Psoas muscle (tissue), 8 donors: ENCODE measurements at regions of chr2 and their contacts with region 1.

Region 1: DNA sequence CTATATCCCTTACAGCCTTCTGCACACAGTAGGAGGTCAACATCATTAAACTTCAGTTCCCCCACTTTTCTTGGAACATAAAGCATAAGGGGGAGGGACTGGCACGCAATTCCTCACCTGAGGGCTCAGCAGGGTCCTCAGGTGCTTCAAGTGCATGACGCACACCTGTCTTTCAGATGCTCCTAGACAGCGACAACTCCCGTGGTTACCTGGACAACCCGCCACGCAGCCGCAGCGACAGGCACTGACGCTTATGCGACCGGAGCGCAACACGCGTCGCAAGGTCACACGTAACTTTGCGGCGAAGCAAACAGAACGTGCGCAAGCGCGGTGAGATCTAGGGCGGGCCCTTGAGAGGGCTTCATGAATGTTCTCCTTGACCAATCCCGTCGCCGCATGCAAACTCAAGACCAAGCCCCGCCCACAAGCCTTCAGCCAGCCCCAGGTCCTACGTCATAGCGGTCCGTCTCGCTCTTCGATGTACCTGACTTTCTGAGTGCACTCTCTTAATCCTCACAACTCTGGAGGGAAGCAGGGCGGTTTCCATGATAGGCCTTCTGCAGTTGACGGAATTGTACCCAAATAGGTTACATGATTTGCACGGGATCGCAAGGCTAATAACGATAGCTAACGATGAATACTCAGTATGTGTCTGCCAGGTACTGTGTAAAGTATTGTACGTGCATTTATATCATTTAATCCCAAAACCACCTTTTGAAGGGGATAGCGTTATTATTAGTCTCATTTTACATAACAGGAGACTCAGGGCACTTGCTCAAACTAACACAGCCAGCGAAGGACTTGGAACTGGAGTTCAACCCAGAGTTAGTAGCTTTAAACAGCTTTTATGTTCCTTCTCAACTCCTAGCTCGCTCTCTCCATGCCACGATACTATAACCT is at the start of gene IFT172:
- DNase-seq: peak; percentile 99
- ATAC-seq: peak; percentile 93 to 99 (median 96)
- H3K4me3 ChIP-seq: peak within 1 kb of the TSS; percentile 66
- H3K27ac ChIP-seq: peak within 1 kb of the TSS; percentile 41
- H3K4me1 ChIP-seq: peaks cover 11% of the 10 kb centered on the region
- H3K27me3 ChIP-seq: peaks cover 0 to 7% (median under 1%) of the 10 kb centered on the region in 3 donors
- CTCF ChIP-seq: no peak
- total RNA-seq, gene IFT172: 4.4 to 10.1 (median 5.9) TPM

Region 2: GRCh38 chr2:27628767-27629709 is 139.3 kb after region 1 on chr2 and contains the starts of genes CCDC121 and GPN1:
- intact Hi-C with region 1: loop called (anchors 5 to 10 kb)
- DNase-seq: peak; percentile 91 to 93
- ATAC-seq: peak; percentile 95 to 98 (median 96)
- H3K4me3 ChIP-seq: peak within 1 kb of the TSS; percentile 79
- H3K27ac ChIP-seq: peak within 1 kb of the TSS; percentile 76
- H3K4me1 ChIP-seq: peaks cover 9% of the 10 kb centered on the region
- H3K27me3 ChIP-seq: no peaks in the 10 kb centered on the region
- CTCF ChIP-seq: no peak
- total RNA-seq, gene CCDC121: 0.98 to 4.8 (median 2.6) TPM
- total RNA-seq, gene GPN1: 24.2 to 28.5 (median 26.2) TPM

Region 3: DNA sequence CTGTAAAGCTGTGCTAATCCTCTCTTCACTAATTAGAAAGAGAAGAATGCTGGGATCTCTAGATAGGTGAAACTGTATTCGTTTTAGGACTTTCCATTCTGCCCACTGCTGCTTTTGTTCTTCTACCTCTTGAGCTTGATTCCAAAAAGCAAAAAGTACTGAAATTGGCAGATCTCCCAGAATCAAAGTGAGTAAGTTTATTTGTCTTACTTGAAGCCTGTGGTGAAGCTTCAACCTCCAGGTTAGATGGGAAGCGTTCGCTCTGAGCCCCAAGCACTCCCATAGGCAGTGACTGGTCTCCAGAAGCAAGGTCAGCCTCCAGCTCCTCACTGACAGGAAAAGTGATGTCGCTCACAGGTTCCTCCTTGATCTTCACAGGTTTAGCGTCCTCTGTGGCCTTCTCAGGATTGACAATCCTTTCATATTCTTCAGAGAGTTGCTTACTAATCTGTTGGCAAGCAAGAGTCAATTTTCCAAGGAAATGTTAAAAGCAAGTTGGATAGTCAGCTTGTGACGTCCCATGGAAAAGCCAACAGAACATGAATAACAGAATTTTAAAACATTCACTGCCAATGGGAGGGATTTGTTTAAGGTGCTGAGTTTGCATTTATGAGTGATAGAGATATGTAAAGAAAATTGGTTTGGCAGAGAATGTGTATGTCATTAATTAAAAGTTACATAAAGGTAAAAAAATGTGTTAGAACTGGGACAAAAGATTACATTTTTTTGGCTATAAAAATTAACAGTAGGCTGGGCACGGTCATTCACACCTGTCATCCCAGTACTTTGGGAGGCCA is 165.6 kb after region 1 on chr2:
- intact Hi-C with region 1: loop called in 1 of 2 experiments (anchors 10 kb)
- DNase-seq: no peak
- ATAC-seq: no peak
- H3K4me3 ChIP-seq: no peak overlapping the region
- H3K27ac ChIP-seq: no peak overlapping the region
- H3K4me1 ChIP-seq: peaks cover 4% of the 10 kb centered on the region
- H3K27me3 ChIP-seq: no peaks in the 10 kb centered on the region
- CTCF ChIP-seq: no peak